HEK293 (cell line): ENCODE measurements at regions of chr22 and their contacts with region 1.

Region 1: DNA sequence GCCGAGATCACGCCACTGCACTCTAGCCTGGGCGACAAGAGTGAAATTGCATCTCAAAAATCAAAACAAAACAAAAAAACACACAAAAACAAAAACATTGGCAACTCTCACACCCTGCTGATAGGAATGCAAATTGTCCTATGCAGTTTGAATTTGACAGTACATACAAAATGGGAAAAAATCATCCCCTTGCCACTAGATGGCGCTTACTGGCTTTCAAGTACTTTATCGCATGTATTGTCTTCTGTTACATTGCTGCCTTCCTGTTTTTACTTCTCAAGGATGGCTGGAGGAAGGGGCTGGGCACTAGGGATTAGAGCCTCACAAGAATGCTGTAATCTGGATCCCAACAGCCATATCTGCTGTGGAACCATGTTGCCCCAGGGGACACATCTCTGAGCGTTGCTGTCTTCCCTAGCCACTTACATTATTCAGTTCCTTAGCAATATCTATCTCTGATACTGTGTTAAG is 59.4 kb upstream of the A4GALT start:
- H3K4me3 ChIP-seq: no peak overlapping the region
- H3K27ac ChIP-seq: no peak overlapping the region
- H3K4me1 ChIP-seq: no peaks in the 10 kb centered on the region
- CTCF ChIP-seq: peak; percentile 95

Region 2: GRCh38 chr22:42820066-42820763 is 40.1 kb after region 1 on chr22:
- CTCF ChIA-PET with region 1: interaction called, 15 read pairs
- POLR2A ChIA-PET with region 1: no interaction called
- H3K4me3 ChIP-seq: no peak overlapping the region
- H3K27ac ChIP-seq: no peak overlapping the region
- H3K4me1 ChIP-seq: no peaks in the 10 kb centered on the region
- CTCF ChIP-seq: no peak

Region 3: GRCh38 chr22:42863349-42863961 is 83.3 kb after region 1 on chr22:
- CTCF ChIA-PET with region 1: interaction called, 16 read pairs
- POLR2A ChIA-PET with region 1: no interaction called
- H3K4me3 ChIP-seq: no peak overlapping the region
- H3K27ac ChIP-seq: no peak overlapping the region
- H3K4me1 ChIP-seq: no peaks in the 10 kb centered on the region
- CTCF ChIP-seq: no peak